ENCODE measurements at regions of chr9 and their contacts with region 1.

Region 1: GRCh38 chr9:137578518-137579258 is at the start of gene DPH7:
- DNase-seq: no peak
- H3K4me3 ChIP-seq: peak within 1 kb of the TSS; percentile 91
- H3K27me3 ChIP-seq: no peaks in the 10 kb centered on the region
- CTCF ChIP-seq: peak; percentile 92
- polyA plus RNA-seq, gene DPH7: 21.1 and 29.4 TPM in 2 replicates

Region 2: GRCh38 chr9:137589441-137590115 is 10.9 kb after region 1 on chr9:
- CTCF ChIA-PET with region 1: interaction called, 26 read pairs
- POLR2A ChIA-PET with region 1: no interaction called
- DNase-seq: no peak
- H3K4me3 ChIP-seq: peak overlapping the region; percentile 70
- H3K27me3 ChIP-seq: no peaks in the 10 kb centered on the region
- CTCF ChIP-seq: no peak

Region 3: DNA sequence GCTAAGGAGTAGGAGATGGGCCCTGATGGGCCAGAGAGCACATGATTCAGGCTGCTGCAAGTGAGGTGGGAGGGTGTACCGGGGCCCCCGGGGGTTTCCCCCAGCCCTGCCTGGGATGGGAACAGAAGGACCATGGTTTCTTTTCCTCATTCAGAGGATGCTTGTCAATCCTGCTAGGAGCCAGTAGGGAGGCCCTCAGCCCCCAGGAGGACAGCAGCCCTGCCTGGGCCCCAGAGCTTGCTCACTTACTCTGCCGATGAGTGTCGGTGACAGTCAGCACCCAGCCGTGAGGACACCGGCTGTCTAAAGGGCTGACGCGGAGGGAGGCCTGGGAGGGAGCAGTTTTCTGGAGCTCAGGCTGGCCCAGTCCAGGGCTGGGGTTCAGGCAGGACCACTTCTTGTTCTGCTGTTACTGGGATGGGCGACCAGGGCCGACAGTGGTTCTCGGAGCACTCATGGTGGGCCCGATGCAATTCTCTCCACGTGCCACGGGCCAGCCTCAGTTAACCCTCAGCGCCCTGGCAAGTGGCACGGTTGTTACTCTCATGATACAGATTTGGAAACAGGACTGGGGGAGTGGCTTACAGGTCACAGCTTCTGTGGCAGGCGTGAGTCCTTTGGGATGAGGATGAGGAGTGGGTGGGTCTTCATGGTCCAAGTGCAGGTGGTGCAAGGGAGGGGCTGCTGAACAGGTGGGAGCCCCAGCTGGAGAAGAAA is 28.6 kb after region 1 on chr9:
- CTCF ChIA-PET with region 1: interaction called, 3 read pairs
- POLR2A ChIA-PET with region 1: interaction called, 16 read pairs
- DNase-seq: no peak
- H3K4me3 ChIP-seq: peak overlapping the region; percentile 73; the same call in 1 of the 2 replicates
- H3K27me3 ChIP-seq: no peaks in the 10 kb centered on the region; the same call in 1 of the 2 replicates
- CTCF ChIP-seq: no peak